Activated naive CD4-positive, alpha-beta T cell treated with anti-CD3 and anti-CD28 coated beads for 36 hours (primary cell): ENCODE measurements at regions of chr17 and their contacts with region 1.

Region 1: GRCh38 chr17:39777534-39778365 is 40.0 kb downstream of the GRB7 start:
- DNase-seq: peak; percentile 34
- H3K4me3 Mint-ChIP-seq: peak overlapping the region; percentile 74
- H3K27ac Mint-ChIP-seq: peak overlapping the region; percentile 86
- H3K4me1 Mint-ChIP-seq: peaks cover 83% of the 10 kb centered on the region
- H3K27me3 Mint-ChIP-seq: no peaks in the 10 kb centered on the region

Region 2: GRCh38 chr17:39722965-39723848 is 54.5 kb before region 1 on chr17:
- CTCF ChIA-PET with region 1: no interaction called
- intact Hi-C with region 1: no loop called
- DNase-seq: no peak
- H3K4me3 Mint-ChIP-seq: no peak overlapping the region
- H3K27ac Mint-ChIP-seq: no peak overlapping the region
- H3K4me1 Mint-ChIP-seq: no peaks in the 10 kb centered on the region
- H3K27me3 Mint-ChIP-seq: no peaks in the 10 kb centered on the region

Region 3: DNA sequence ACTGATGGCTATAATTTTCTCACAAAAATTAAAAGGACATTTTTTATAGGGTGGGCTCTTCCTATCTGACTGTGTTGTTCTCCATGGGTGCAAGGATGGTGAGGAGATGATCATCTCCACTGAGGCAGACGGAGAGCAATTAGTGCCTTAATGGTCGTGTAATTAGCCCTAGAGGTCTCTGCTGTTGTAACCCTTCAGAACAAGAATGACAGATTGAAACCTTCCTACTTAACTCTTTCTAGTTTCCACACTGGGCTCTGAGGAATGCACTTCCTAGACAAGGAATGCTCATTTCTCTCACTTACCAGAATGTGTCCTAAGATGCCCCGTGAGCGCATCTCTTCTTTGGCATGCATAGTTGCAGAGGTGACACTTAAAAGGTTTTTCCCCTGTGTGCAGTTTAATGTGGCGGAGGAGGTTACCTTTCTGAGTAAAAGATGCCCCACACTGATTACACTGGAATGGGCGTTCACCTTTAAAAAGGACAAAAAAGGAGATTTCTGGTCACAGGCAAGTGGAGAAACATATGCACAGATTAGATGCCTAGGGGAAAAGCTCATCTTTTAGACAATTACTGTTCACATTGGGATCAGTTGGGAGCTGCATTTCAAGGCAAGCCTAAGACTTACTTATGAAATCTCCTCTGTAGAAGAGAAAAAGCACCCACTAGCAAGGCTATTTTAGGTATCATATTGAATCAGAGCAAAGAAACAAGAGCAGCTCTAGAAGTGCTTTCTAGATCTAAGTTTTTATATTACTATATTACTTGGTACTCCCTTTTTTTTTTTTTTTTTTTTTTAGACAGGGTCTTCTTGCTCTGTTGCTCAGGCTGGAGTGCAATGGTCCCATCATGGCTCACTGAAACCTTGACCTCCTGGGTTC is 13.6 kb after region 1 on chr17:
- CTCF ChIA-PET with region 1: interaction called, 9 read pairs
- intact Hi-C with region 1: loop called (anchors 1 kb)
- DNase-seq: peak; percentile 75
- H3K4me3 Mint-ChIP-seq: no peak overlapping the region
- H3K27ac Mint-ChIP-seq: peak overlapping the region; percentile 86
- H3K4me1 Mint-ChIP-seq: peaks cover 57% of the 10 kb centered on the region
- H3K27me3 Mint-ChIP-seq: no peaks in the 10 kb centered on the region

Region 4: GRCh38 chr17:39822051-39822451 is 44.3 kb after region 1 on chr17:
- CTCF ChIA-PET with region 1: interaction called, 4 read pairs
- intact Hi-C with region 1: loop called (anchors 1 kb)
- DNase-seq: peak; percentile 49
- H3K4me3 Mint-ChIP-seq: no peak overlapping the region
- H3K27ac Mint-ChIP-seq: no peak overlapping the region
- H3K4me1 Mint-ChIP-seq: peaks cover 52% of the 10 kb centered on the region
- H3K27me3 Mint-ChIP-seq: no peaks in the 10 kb centered on the region

Region 5: DNA sequence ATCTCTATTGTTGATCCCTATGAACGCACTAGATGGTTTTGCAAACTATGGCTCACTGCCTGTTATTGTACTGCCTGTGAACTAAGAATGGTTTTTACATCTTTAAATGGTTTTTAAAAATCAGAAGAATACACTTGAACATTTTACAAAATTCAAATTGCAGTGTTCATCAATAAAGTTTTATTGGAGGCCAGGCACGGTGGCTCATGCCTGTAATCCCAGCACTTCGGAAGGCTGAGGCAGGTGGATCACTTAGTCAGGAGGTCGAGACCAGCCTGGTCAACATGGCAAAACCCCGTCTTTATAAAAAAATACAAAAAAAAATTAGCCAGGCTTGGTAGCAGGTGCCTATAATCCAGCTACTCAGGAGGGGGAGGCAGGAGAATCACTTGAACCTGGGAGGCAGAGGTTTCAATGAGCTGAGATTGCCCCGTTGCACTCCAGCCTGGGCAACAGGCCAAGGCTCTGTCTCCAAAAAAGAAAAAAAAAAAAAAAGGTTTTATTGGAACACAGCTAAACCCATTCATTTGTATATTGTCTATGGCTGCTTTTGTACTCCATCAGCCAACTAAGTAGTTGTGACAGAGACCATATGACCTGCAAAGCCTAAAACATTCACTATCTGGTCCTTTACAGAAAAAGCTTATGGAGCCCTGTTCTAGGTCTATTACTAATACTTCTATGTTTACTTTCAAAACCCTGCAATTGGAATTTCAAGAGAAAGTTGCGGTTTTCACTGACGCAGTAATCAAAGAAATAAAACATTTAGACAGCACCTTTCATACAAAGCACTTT is 67.5 kb after region 1 on chr17:
- CTCF ChIA-PET with region 1: interaction called, 6 read pairs
- intact Hi-C with region 1: loop called (anchors 2 kb)
- DNase-seq: no peak
- H3K4me3 Mint-ChIP-seq: no peak overlapping the region
- H3K27ac Mint-ChIP-seq: peak overlapping the region; percentile 15
- H3K4me1 Mint-ChIP-seq: peaks cover 69% of the 10 kb centered on the region
- H3K27me3 Mint-ChIP-seq: no peaks in the 10 kb centered on the region